ENCODE measurements at regions of chr1 and their contacts with region 1.

Region 1: DNA sequence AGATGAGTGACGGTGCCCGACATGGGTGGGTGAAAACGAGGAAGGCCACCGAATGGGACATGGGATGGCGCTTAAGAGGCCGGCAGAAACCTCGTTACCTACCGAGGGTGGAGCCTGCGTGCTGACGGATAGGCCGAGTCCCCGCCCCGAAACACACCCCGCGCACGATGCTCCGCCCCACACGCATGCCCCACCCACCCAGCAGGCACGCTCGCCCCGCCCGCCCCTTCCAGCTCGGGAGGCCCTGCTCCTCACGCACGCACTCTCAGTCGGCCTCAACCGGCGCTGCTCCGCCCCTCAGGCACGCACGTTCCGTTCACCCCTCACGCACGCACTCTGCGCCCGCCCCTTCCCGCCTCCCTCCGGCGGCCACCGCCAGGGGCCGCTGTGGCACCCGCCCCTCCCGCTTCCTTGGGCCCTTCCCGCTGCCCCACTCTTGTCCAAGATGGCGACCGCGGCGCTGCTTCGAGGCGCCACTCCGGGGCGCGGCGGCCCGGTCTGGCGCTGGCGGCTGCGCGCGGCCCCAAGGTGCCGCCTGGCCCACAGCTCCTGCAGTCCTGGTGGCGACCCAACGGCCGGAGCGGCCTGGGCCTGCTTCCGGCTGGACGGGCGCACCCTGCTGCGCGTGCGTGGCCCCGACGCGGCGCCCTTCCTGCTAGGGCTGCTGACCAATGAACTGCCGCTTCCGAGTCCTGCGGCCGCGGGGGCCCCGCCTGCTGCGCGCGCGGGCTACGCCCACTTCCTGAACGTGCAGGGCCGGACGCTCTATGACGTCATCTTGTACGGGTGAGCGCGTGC is at the start of gene IBA57:
- DNase-seq: peak; percentile 100
- ATAC-seq: peak; percentile 85
- H3K4me3 Mint-ChIP-seq: peak within 1 kb of the TSS; percentile 90
- H3K27ac Mint-ChIP-seq: peak within 1 kb of the TSS; percentile 94
- H3K4me1 Mint-ChIP-seq: peaks cover 29% of the 10 kb centered on the region
- H3K27me3 Mint-ChIP-seq: no peaks in the 10 kb centered on the region
- CTCF ChIP-seq: no peak
- total RNA-seq, gene IBA57: 10.8 and 14.5 TPM in 2 replicates

Region 2: GRCh38 chr1:226940029-226940805 is 1225.4 kb before region 1 on chr1 and contains the start of gene COQ8A:
- CTCF ChIA-PET with region 1: no interaction called
- POLR2A ChIA-PET with region 1: no interaction called
- intact Hi-C with region 1: loop called (anchors 5 kb)
- DNase-seq: peak; percentile 97
- ATAC-seq: peak; percentile 93
- H3K4me3 Mint-ChIP-seq: peak within 1 kb of the TSS; percentile 89
- H3K27ac Mint-ChIP-seq: peak within 1 kb of the TSS; percentile 96
- H3K4me1 Mint-ChIP-seq: peaks cover 49% of the 10 kb centered on the region
- H3K27me3 Mint-ChIP-seq: no peaks in the 10 kb centered on the region
- CTCF ChIP-seq: no peak
- total RNA-seq, gene COQ8A: 24.7 and 28.5 TPM in 2 replicates

Region 3: GRCh38 chr1:227999056-227999930 is 166.3 kb before region 1 on chr1:
- CTCF ChIA-PET with region 1: interaction called, 4 read pairs
- POLR2A ChIA-PET with region 1: no interaction called
- intact Hi-C with region 1: loop called (anchors 1 kb)
- DNase-seq: peak; percentile 40
- ATAC-seq: peak; percentile 95
- H3K4me3 Mint-ChIP-seq: no peak overlapping the region
- H3K27ac Mint-ChIP-seq: no peak overlapping the region
- H3K4me1 Mint-ChIP-seq: no peaks in the 10 kb centered on the region
- H3K27me3 Mint-ChIP-seq: peaks cover 26% of the 10 kb centered on the region
- CTCF ChIP-seq: no peak

Region 4: DNA sequence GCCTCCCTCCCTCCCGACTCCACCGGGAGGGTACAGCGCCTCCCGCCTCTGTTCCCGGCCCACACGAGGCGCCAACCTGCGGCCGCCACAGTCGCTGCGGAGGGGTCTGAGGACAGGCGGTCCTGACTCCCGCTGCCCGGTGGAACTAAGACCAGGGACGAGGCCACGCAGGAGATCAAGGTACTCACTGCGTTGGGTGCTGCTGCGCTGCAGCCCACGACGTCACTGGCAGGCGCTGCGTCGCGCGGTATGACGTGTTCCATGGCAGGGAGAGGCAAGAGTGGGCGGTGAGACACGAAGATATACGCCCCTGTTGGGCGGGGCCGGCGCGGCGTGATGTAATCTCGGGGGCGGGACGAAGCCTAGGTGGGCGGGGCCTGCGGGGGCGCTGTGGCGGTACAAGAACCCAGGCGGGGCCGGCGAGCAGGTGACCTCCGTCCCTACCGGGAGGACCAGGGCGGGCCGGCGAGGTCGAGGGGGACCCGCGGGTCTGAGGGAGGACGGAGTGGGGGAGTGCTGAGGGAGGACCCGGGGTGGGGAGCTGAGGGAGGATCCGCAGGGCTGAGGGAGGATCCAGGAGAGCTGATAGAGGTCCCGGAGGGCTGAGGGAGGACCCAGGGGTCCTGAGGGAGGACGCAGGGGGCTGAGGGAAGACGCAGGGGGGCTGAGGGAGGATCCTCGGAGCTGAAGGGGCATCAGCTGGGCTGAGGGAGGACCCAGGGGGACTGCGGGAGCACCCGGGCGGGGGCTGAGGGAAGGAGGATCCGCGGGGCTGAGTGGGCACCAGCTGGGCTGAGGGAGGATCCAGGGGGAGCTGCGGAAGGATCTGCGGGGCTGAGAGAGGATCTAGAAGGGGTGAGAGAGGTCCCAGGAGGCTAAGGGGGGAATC is 56.3 kb before region 1 on chr1 and contains the start of gene MRPL55:
- CTCF ChIA-PET with region 1: interaction called, 3 read pairs
- POLR2A ChIA-PET with region 1: interaction called, 47 read pairs
- intact Hi-C with region 1: loop called (anchors 1 kb)
- DNase-seq: peak; percentile 100
- ATAC-seq: peak; percentile 96
- H3K4me3 Mint-ChIP-seq: peak within 1 kb of the TSS; percentile 92
- H3K27ac Mint-ChIP-seq: peak within 1 kb of the TSS; percentile 93
- H3K4me1 Mint-ChIP-seq: peaks cover 24% of the 10 kb centered on the region
- H3K27me3 Mint-ChIP-seq: no peaks in the 10 kb centered on the region
- CTCF ChIP-seq: no peak
- total RNA-seq, gene MRPL55: 34.0 and 34.3 TPM in 2 replicates

Region 5: GRCh38 chr1:228212966-228213844 is 47.6 kb after region 1 on chr1:
- CTCF ChIA-PET with region 1: interaction called, 4 read pairs
- POLR2A ChIA-PET with region 1: interaction called, 15 read pairs
- intact Hi-C with region 1: loop called (anchors 1 kb)
- DNase-seq: peak; percentile 76
- ATAC-seq: peak; percentile 97
- H3K4me3 Mint-ChIP-seq: peak overlapping the region; percentile 89
- H3K27ac Mint-ChIP-seq: peak overlapping the region; percentile 30
- H3K4me1 Mint-ChIP-seq: peaks cover 2% of the 10 kb centered on the region
- H3K27me3 Mint-ChIP-seq: no peaks in the 10 kb centered on the region
- CTCF ChIP-seq: no peak

Region 6: GRCh38 chr1:228486596-228487335 is 321.2 kb after region 1 on chr1:
- CTCF ChIA-PET with region 1: no interaction called
- POLR2A ChIA-PET with region 1: interaction called, 8 read pairs
- intact Hi-C with region 1: loop called (anchors 1 kb)
- DNase-seq: peak; percentile 65
- ATAC-seq: peak; percentile 64
- H3K4me3 Mint-ChIP-seq: peak overlapping the region; percentile 94
- H3K27ac Mint-ChIP-seq: peak overlapping the region; percentile 100
- H3K4me1 Mint-ChIP-seq: peaks cover 38% of the 10 kb centered on the region
- H3K27me3 Mint-ChIP-seq: no peaks in the 10 kb centered on the region
- CTCF ChIP-seq: no peak

Measured in activated B cell treated with CpG ODN at 0.5 μM for 24 hours (primary cell).